Common myeloid progenitor, CD34-positive (primary cell): ENCODE measurements at regions of chr10 and their contacts with region 1.

Region 1: GRCh38 chr10:96292971-96293920 is 11.0 kb upstream of the DNTT start:
- DNase-seq: peak; percentile 60 to 72 (median 72)
- H3K4me3 ChIP-seq: peak overlapping the region in 1 of 7 experiments; percentile 17
- H3K27ac ChIP-seq: no peak overlapping the region
- H3K4me1 ChIP-seq: peaks cover 2 to 44% (median 23%) of the 10 kb centered on the region in 4 experiments
- H3K27me3 ChIP-seq: peaks cover 0 to 2% (median 0%) of the 10 kb centered on the region in 5 experiments

Region 2: DNA sequence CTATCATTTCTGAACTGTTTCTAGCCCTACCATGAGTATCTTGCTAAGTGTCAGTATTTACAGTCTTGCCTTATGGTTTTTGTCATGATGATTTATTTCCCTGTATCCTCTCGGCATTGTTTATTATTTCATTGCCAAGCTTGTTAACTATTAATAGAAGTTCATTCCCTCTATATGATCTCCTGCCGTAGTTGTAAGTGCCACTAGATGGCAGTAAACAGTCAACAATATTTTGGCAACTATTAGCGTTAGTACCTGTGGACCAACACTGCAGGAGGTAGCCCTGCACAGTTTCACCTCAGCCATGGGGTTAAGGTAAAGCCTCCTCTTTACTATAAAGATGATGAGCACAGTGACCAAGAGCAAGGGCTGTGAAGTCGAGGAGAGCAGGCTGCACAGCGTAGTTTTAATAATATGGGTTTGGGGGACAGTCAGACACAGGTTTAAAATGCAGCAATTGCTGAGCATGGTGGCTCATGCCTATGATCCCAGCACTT is 276.0 kb before region 1 on chr10:
- CTCF ChIA-PET with region 1: interaction called, 10 read pairs
- POLR2A ChIA-PET with region 1: no interaction called
- DNase-seq: peak; percentile 60 to 78 (median 70)
- H3K4me3 ChIP-seq: no peak overlapping the region
- H3K27ac ChIP-seq: no peak overlapping the region
- H3K4me1 ChIP-seq: peaks cover 0 to 5% (median 1%) of the 10 kb centered on the region in 4 experiments
- H3K27me3 ChIP-seq: no peaks in the 10 kb centered on the region

Region 3: GRCh38 chr10:96236090-96236478 is 57.2 kb before region 1 on chr10:
- CTCF ChIA-PET with region 1: interaction called, 253 read pairs
- POLR2A ChIA-PET with region 1: no interaction called
- DNase-seq: peak; percentile 33 to 94 (median 93)
- H3K4me3 ChIP-seq: peak overlapping the region in 1 of 7 experiments; percentile 26
- H3K27ac ChIP-seq: no peak overlapping the region
- H3K4me1 ChIP-seq: peaks cover 0 to 30% (median 26%) of the 10 kb centered on the region in 4 experiments
- H3K27me3 ChIP-seq: no peaks in the 10 kb centered on the region